MCF 10A (cell line): ENCODE measurements at regions of chr13 and their contacts with region 1.

Region 1: GRCh38 chr13:96141027-96141426 is 51.1 kb downstream of the HS6ST3 start:
- DNase-seq: peak; percentile 52
- H3K4me3 Mint-ChIP-seq: no peak overlapping the region
- H3K27ac Mint-ChIP-seq: no peak overlapping the region
- H3K4me1 Mint-ChIP-seq: no peaks in the 10 kb centered on the region
- H3K27me3 Mint-ChIP-seq: no peaks in the 10 kb centered on the region
- CTCF ChIP-seq: peak; percentile 43

Region 2: DNA sequence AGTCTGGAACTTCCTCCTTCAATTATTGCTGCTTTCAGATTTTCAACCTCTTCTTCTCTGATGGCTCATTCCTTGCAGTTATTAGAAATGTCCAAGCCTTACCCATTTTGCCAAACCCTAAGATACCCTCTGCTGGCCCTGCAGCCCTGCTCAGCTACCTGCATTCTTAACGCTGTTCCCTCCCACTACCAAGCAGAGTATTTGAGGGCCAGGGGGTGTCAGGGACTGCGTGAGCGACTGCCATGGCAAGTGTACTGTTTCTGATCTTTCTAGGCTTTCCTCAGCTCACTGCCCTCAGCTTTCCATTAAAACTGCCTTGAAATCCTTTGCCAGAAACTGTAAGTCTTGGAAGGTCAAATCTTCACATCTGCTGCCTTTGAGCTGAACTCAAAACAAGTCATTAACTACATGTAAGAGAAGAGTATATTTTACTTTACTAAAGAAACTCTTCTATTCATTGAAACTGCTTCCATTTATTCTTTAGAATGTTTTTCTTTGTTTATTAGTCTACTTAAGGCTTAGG is 10.1 kb before region 1 on chr13:
- CTCF ChIA-PET with region 1: interaction called, 14 read pairs
- POLR2A ChIA-PET with region 1: interaction called, 3 read pairs
- intact Hi-C with region 1: no loop called
- DNase-seq: no peak
- H3K4me3 Mint-ChIP-seq: no peak overlapping the region
- H3K27ac Mint-ChIP-seq: no peak overlapping the region
- H3K4me1 Mint-ChIP-seq: no peaks in the 10 kb centered on the region
- H3K27me3 Mint-ChIP-seq: no peaks in the 10 kb centered on the region
- CTCF ChIP-seq: no peak

Region 3: GRCh38 chr13:96172066-96172465 is 31.0 kb after region 1 on chr13:
- CTCF ChIA-PET with region 1: interaction called, 10 read pairs
- POLR2A ChIA-PET with region 1: no interaction called
- intact Hi-C with region 1: no loop called
- DNase-seq: peak; percentile 74
- H3K4me3 Mint-ChIP-seq: no peak overlapping the region
- H3K27ac Mint-ChIP-seq: no peak overlapping the region
- H3K4me1 Mint-ChIP-seq: no peaks in the 10 kb centered on the region
- H3K27me3 Mint-ChIP-seq: no peaks in the 10 kb centered on the region
- CTCF ChIP-seq: no peak

Region 4: GRCh38 chr13:96796091-96796633 is 655.1 kb after region 1 on chr13:
- CTCF ChIA-PET with region 1: interaction called, 6 read pairs
- POLR2A ChIA-PET with region 1: no interaction called
- intact Hi-C with region 1: loop called (anchors 1 kb)
- DNase-seq: no peak
- H3K4me3 Mint-ChIP-seq: no peak overlapping the region
- H3K27ac Mint-ChIP-seq: no peak overlapping the region
- H3K4me1 Mint-ChIP-seq: peaks cover 6% of the 10 kb centered on the region
- H3K27me3 Mint-ChIP-seq: no peaks in the 10 kb centered on the region
- CTCF ChIP-seq: peak; percentile 52

Region 5: GRCh38 chr13:96958286-96958891 is 817.4 kb after region 1 on chr13:
- CTCF ChIA-PET with region 1: interaction called, 7 read pairs
- POLR2A ChIA-PET with region 1: no interaction called
- intact Hi-C with region 1: loop called (anchors 1 kb)
- DNase-seq: peak; percentile 64
- H3K4me3 Mint-ChIP-seq: no peak overlapping the region
- H3K27ac Mint-ChIP-seq: no peak overlapping the region
- H3K4me1 Mint-ChIP-seq: no peaks in the 10 kb centered on the region
- H3K27me3 Mint-ChIP-seq: no peaks in the 10 kb centered on the region
- CTCF ChIP-seq: peak; percentile 57

Region 6: DNA sequence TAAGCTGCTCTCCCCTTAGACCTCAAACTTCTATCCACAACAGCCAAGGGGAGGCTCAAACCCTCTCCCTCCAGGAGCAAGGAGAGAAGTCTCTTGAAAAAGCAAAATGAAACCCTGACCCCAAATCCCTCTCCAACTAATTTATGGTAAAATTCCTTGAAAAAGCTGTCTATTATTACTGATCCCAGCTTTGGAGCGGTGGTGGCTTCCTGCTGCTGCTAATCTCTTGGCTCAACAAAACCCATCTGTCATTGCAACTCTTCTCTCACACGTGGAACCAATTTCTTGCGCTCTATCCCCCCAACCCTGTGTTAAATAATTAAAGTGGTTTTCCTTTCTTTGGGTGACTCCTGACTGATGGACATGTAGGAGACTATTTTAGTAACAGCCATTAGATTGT is 917.4 kb after region 1 on chr13:
- CTCF ChIA-PET with region 1: no interaction called
- POLR2A ChIA-PET with region 1: no interaction called
- intact Hi-C with region 1: no loop called
- DNase-seq: no peak
- H3K4me3 Mint-ChIP-seq: no peak overlapping the region
- H3K27ac Mint-ChIP-seq: no peak overlapping the region
- H3K4me1 Mint-ChIP-seq: no peaks in the 10 kb centered on the region
- H3K27me3 Mint-ChIP-seq: peaks cover 52% of the 10 kb centered on the region
- CTCF ChIP-seq: no peak